Activated CD4-positive, alpha-beta T cell treated with anti-CD3 and anti-CD28 coated beads for 36 hours (primary cell): ENCODE measurements at regions of chr17 and their contacts with region 1.

Region 1: DNA sequence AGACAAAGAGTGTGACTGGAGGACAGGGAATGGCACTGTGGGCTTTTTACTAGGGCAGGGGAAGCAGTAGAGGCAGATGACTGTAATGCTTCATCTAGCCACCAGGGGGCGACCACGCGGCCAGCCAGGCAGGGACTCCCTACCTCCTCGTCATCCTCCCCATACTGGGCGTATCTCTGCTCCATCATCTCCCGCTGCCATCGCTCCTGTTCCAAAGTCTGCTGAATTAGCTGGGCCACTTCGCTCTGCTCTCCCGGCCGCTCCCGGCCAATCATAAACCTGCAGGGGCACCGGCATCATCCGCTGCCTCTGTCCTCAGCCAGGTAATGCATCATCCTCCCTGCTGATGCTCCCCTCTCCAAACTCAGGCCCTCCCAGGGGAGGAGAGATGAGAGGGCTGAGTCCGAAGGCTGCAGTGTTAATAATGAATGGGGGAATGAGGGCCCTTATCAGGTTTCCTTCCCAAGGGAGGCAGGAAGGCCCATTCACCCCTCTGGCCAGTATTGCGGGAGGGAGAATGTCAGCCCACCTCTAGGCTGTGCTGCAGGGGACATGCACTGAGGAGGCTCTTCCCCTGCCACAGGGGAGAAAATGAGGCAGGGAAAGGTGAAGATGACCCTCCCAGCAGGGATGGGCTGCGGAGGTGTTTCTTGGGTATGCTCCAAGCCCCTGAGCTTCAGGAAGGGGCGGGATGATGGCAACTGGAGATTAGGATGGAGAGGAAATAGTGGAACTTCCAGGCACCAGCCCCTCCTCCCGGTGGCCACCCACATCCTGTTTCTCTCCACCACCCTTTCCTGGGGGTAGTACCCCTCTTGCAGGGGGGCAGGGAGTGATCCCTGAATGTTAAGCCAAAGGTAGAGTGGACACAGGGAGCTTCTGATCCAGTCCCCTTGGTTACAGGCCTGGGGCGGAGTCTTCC is 10.3 kb upstream of the SAMD14 start:
- DNase-seq: peak; percentile 90
- ATAC-seq: peak; percentile 80
- H3K4me3 Mint-ChIP-seq: no peak overlapping the region
- H3K27ac Mint-ChIP-seq: peak overlapping the region; percentile 70
- H3K4me1 Mint-ChIP-seq: peaks cover 51% of the 10 kb centered on the region
- H3K27me3 Mint-ChIP-seq: no peaks in the 10 kb centered on the region

Region 2: DNA sequence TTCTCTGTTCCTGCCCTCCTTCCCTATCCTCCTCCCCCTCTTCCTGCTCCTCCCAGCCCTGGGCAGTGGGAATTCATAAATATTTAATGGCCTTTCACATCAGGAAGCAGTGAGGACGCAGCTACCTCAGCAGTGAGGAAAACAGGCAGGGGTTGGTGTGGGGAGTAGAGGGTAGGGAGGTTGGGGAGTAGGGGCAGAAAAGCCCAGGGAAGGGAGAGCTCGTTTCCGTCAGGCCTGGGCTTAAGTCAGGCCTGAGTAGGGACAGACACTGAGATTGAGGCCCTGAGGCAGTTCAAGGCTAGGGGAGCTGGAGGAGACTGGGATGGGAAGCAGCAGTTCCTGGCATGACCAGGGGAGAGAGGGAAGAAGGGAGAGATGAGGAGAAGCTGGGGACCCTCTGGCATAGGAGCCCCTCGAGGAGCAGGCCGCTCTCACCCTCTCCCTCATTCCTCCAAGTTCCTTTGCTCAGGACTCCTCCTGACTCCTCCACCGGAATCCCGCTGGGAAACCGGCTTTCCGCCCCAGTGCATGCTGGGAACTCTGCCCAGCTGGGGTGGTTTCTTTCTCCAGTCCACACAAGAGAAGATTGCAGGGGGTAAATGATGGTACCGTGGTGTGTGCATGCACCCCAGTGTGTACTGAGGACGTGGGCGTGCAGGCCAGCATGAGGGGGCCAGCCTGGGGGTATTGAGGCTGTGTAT is 16.4 kb before region 1 on chr17:
- CTCF ChIA-PET with region 1: interaction called, 13 read pairs
- POLR2A ChIA-PET with region 1: no interaction called
- intact Hi-C with region 1: no loop called
- DNase-seq: no peak
- ATAC-seq: no peak
- H3K4me3 Mint-ChIP-seq: no peak overlapping the region
- H3K27ac Mint-ChIP-seq: no peak overlapping the region
- H3K4me1 Mint-ChIP-seq: peaks cover 4% of the 10 kb centered on the region
- H3K27me3 Mint-ChIP-seq: peaks cover 14% of the 10 kb centered on the region

Region 3: GRCh38 chr17:50151041-50151936 is 11.1 kb after region 1 on chr17:
- CTCF ChIA-PET with region 1: interaction called, 13 read pairs
- POLR2A ChIA-PET with region 1: interaction called, 3 read pairs
- intact Hi-C with region 1: loop called in 1 of 2 experiments (anchors 1 kb)
- DNase-seq: peak; percentile 95
- ATAC-seq: peak; percentile 66
- H3K4me3 Mint-ChIP-seq: peak overlapping the region; percentile 90
- H3K27ac Mint-ChIP-seq: peak overlapping the region; percentile 96
- H3K4me1 Mint-ChIP-seq: peaks cover 40% of the 10 kb centered on the region
- H3K27me3 Mint-ChIP-seq: no peaks in the 10 kb centered on the region

Region 4: DNA sequence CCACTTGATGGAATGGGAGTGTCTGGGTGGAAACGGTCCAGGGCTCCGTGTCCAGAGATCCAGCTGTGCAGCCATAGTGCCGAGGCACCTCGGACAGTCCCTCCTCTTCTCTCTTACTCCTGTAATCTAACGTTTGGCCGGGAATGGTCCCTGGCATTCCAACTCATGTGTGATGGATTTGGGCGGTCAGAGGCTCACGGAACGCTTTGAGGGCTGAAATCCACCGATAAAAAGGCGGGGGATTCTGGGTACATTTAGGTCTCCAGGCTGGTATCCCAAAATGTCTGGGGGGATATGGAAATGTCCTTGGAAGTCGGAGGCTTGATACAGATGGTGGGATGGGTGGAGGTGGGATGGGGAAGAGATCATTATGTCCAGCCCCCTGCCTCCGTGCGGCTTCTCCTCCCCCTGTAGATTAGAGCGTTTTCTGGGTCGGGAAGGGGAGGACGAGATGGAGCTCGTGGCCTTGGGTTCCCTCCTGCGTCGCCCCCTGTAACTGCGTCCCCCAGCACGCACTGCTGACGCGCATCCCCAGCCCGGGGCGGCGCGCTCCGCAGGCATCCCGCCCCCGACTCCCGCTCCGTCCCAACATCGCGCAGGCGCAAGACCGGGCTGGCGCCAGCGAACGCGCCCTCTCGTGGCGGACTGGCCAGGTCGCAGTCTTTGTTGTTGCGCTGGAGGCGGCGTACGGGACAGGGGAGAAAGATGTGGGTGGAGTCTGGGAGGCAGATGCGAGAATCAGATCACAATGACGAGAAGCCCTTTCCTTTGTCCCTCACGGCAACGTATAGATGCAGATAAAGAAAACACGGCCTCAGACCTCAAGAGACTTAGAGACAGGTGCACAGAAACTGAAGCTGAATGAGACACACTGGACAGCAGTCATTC is 21.1 kb after region 1 on chr17:
- CTCF ChIA-PET with region 1: interaction called, 22 read pairs
- POLR2A ChIA-PET with region 1: no interaction called
- intact Hi-C with region 1: loop called (anchors 1 kb)
- DNase-seq: peak; percentile 98
- ATAC-seq: peak; percentile 96
- H3K4me3 Mint-ChIP-seq: peak overlapping the region; percentile 78
- H3K27ac Mint-ChIP-seq: peak overlapping the region; percentile 99
- H3K4me1 Mint-ChIP-seq: peaks cover 42% of the 10 kb centered on the region
- H3K27me3 Mint-ChIP-seq: no peaks in the 10 kb centered on the region

Region 5: GRCh38 chr17:50177983-50178834 is 38.0 kb after region 1 on chr17:
- CTCF ChIA-PET with region 1: interaction called, 4 read pairs
- POLR2A ChIA-PET with region 1: no interaction called
- intact Hi-C with region 1: loop called in 1 of 2 experiments (anchors 1 kb)
- DNase-seq: peak; percentile 71
- ATAC-seq: peak; percentile 93
- H3K4me3 Mint-ChIP-seq: no peak overlapping the region
- H3K27ac Mint-ChIP-seq: no peak overlapping the region
- H3K4me1 Mint-ChIP-seq: peaks cover 8% of the 10 kb centered on the region
- H3K27me3 Mint-ChIP-seq: no peaks in the 10 kb centered on the region